ENCODE measurements at regions of chr16 and their contacts with region 1.

Region 1: DNA sequence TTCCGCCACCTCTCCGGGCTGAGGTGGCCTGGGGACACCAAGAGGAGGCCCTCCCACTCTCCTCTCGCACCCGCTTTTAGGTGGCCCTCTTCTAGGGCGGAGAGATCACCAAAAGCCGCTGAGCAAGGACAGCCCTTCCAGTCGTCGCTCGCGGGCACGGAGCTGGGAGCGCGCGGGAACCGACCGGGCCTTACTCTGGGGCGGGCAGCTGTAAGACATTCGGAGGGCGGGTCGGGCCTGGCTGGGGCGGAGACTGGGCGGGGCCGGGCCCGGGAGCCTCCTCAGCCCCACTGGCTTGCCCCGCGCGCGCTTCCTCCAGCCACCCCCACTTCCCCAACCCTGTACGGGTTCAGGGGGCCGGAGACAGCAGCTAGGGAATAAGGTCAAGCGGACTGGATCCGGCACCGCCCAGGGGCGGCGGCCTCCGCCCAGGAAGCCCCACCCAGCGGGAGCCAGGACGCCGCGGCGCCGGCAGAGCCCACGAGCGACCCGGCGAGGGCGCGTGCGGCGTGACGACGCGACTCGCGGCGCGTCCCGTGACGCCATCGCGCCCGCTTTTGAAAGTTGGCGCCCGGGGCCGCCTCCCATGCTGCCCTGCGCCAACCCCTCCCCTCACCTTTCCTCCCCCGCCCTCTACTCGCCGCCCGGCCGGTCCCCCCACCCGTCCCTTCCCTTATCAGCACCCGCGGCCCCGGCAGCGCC is 351 bp upstream of the CTCF start:
- DNase-seq: peak; percentile 95
- ATAC-seq: peak; percentile 86
- H3K4me3 ChIP-seq: peak overlapping the region; percentile 95
- H3K27ac ChIP-seq: peak overlapping the region; percentile 72
- H3K4me1 ChIP-seq: peaks cover 5% of the 10 kb centered on the region
- H3K27me3 ChIP-seq: no peaks in the 10 kb centered on the region
- CTCF ChIP-seq: 0 out of 2 replicates have a peak, but pooled peaks have one; percentile 4
- POLR2A ChIP-seq: no peak
- RAD21 ChIP-seq: no peak

Region 2: GRCh38 chr16:67456391-67457081 is 105.4 kb before region 1 on chr16:
- CTCF ChIA-PET with region 1: no interaction called
- POLR2A ChIA-PET with region 1: no interaction called
- dilution Hi-C with region 1: no loop called
- in situ Hi-C with region 1: no loop called
- intact Hi-C with region 1: no loop called
- DNase-seq: peak; percentile 36
- ATAC-seq: peak; percentile 36
- H3K4me3 ChIP-seq: no peak overlapping the region
- H3K27ac ChIP-seq: no peak overlapping the region
- H3K4me1 ChIP-seq: peaks cover 27% of the 10 kb centered on the region
- H3K27me3 ChIP-seq: no peaks in the 10 kb centered on the region
- CTCF ChIP-seq: peak; percentile 50
- POLR2A ChIP-seq: no peak
- RAD21 ChIP-seq: peak; percentile 9; the same call in 1 of the 2 replicates

Region 3: GRCh38 chr16:67571981-67572431 is 10.0 kb after region 1 on chr16:
- CTCF ChIA-PET with region 1: interaction called, 9 read pairs
- POLR2A ChIA-PET with region 1: interaction called, 3 read pairs
- dilution Hi-C with region 1: no loop called
- in situ Hi-C with region 1: no loop called
- intact Hi-C with region 1: loop called (anchors 1 kb)
- DNase-seq: peak; percentile 81
- ATAC-seq: peak; percentile 88
- H3K4me3 ChIP-seq: no peak overlapping the region; the same call in 1 of the 2 replicates
- H3K27ac ChIP-seq: 0 out of 2 replicates have a peak overlapping the region, but pooled peaks have one; percentile 73
- H3K4me1 ChIP-seq: peaks cover 12% of the 10 kb centered on the region
- H3K27me3 ChIP-seq: no peaks in the 10 kb centered on the region
- CTCF ChIP-seq: no peak
- POLR2A ChIP-seq: no peak
- RAD21 ChIP-seq: no peak

Region 4: DNA sequence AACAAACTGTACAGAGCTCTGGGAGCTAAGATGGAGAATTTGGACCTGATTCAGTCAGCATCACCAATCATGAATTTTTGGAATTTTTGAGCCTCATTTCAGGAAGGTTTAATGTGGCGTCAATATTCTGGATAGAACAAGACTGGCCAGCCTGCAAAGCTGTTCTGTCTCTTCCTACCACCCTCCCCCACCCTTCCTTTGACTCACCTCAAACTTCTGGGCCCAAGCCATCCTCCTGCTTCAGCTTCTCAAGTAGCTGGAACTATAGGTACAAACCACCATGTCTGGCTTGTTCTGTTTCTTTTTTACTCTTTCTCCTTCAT is 33.0 kb after region 1 on chr16:
- CTCF ChIA-PET with region 1: interaction called, 3 read pairs
- POLR2A ChIA-PET with region 1: no interaction called
- dilution Hi-C with region 1: no loop called
- in situ Hi-C with region 1: no loop called
- intact Hi-C with region 1: loop called (anchors 5 kb)
- DNase-seq: peak; percentile 68
- ATAC-seq: peak; percentile 38
- H3K4me3 ChIP-seq: no peak overlapping the region
- H3K27ac ChIP-seq: no peak overlapping the region
- H3K4me1 ChIP-seq: peaks cover 8% of the 10 kb centered on the region
- H3K27me3 ChIP-seq: no peaks in the 10 kb centered on the region
- CTCF ChIP-seq: no peak
- POLR2A ChIP-seq: no peak
- RAD21 ChIP-seq: no peak

Region 5: GRCh38 chr16:67641779-67642708 is 80.1 kb after region 1 on chr16:
- CTCF ChIA-PET with region 1: interaction called, 4 read pairs
- POLR2A ChIA-PET with region 1: interaction called, 3 read pairs
- dilution Hi-C with region 1: no loop called
- in situ Hi-C with region 1: no loop called
- intact Hi-C with region 1: loop called (anchors 1 kb)
- DNase-seq: peak; percentile 33
- ATAC-seq: peak; percentile 66
- H3K4me3 ChIP-seq: no peak overlapping the region
- H3K27ac ChIP-seq: no peak overlapping the region
- H3K4me1 ChIP-seq: peaks cover 5% of the 10 kb centered on the region; the same call in 1 of the 2 replicates
- H3K27me3 ChIP-seq: peaks cover 27% of the 10 kb centered on the region
- CTCF ChIP-seq: no peak
- POLR2A ChIP-seq: no peak
- RAD21 ChIP-seq: no peak

Region 6: GRCh38 chr16:67667817-67668494 is 106.0 kb after region 1 on chr16:
- CTCF ChIA-PET with region 1: interaction called, 5 read pairs
- POLR2A ChIA-PET with region 1: no interaction called
- dilution Hi-C with region 1: no loop called
- in situ Hi-C with region 1: no loop called
- intact Hi-C with region 1: loop called (anchors 1 kb)
- DNase-seq: peak; percentile 89
- ATAC-seq: peak; percentile 92
- H3K4me3 ChIP-seq: no peak overlapping the region
- H3K27ac ChIP-seq: no peak overlapping the region; the same call in 1 of the 2 replicates
- H3K4me1 ChIP-seq: peaks cover 12% of the 10 kb centered on the region
- H3K27me3 ChIP-seq: no peaks in the 10 kb centered on the region
- CTCF ChIP-seq: peak; percentile 97
- POLR2A ChIP-seq: no peak
- RAD21 ChIP-seq: peak; percentile 83

Region 7: GRCh38 chr16:67935402-67936123 is 373.6 kb after region 1 on chr16:
- CTCF ChIA-PET with region 1: no interaction called
- POLR2A ChIA-PET with region 1: no interaction called
- dilution Hi-C with region 1: no loop called
- in situ Hi-C with region 1: no loop called
- intact Hi-C with region 1: loop called (anchors 5 kb)
- DNase-seq: peak; percentile 87
- ATAC-seq: peak; percentile 81
- H3K4me3 ChIP-seq: peak overlapping the region; percentile 94
- H3K27ac ChIP-seq: peak overlapping the region; percentile 98
- H3K4me1 ChIP-seq: peaks cover 11% of the 10 kb centered on the region
- H3K27me3 ChIP-seq: no peaks in the 10 kb centered on the region
- CTCF ChIP-seq: no peak
- POLR2A ChIP-seq: peak; percentile 70; the same call in 1 of the 2 replicates
- RAD21 ChIP-seq: no peak

Measured in IMR-90 (cell line).